MCF 10A (cell line): ENCODE measurements at regions of chr16 and their contacts with region 1.

Region 1: DNA sequence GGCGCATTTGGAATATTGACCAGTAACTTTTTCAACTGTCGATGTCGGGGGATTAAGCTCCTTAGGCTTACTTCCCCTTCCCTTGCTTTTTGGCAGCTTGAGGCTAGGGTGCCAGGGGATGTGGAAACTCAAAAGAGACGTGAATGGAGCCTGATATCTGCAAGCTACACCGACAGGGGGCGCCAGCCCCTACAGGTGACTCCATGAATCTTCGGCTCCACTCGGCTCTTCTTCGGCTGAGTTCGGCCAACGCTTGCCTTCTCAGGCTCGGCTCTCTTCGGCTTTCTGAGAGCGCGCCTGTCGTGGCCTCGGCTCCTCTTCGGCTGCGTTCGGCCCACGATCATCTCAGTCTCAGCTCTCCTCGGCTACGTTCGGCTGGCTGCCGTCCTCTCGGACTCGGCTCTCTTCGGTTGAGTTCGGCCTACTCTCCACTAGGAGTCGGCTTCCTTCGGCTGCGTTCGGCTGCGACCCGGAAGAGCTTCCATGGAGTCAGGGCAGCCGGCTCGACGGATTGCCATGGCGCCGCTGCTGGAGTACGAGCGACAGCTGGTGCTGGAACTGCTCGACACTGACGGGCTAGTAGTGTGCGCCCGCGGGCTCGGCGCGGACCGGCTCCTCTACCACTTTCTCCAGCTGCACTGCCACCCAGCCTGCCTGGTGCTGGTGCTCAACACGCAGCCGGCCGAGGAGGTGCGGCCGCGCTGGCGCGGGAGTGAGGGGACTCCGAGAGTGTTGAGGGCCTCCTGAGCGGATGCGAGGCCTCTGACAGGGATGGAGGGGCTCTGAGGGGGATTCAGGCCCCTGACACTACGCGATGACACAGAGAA is at the start of gene ERCC4:
- DNase-seq: peak; percentile 99
- H3K4me3 Mint-ChIP-seq: peak within 1 kb of the TSS; percentile 91
- H3K27ac Mint-ChIP-seq: peak within 1 kb of the TSS; percentile 95
- H3K4me1 Mint-ChIP-seq: peaks cover 11% of the 10 kb centered on the region
- H3K27me3 Mint-ChIP-seq: peaks cover 10% of the 10 kb centered on the region
- CTCF ChIP-seq: peak; percentile 72
- total RNA-seq, gene ERCC4: 10.3 and 15.9 TPM in 2 replicates

Region 2: DNA sequence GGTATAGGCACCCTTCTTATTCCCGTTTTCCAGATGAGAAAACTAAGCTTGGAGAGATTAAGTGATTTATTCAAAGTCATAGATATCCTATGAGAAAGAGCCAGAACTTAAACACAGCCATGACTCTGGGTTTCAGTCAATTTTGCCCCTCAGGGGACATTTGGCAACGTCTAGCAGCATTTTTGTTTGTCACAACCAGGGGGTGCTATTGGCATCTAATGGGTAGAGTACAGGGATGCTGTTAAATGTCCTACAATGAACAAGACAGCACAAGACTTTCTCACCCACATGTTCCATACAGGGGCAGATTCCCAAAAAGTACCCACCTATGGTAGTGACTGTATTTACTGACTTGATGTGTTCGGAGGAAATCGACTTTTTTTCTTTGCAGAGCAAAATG is 1023.3 kb before region 1 on chr16:
- CTCF ChIA-PET with region 1: interaction called, 4 read pairs
- POLR2A ChIA-PET with region 1: no interaction called
- intact Hi-C with region 1: loop called (anchors 5 kb)
- DNase-seq: peak; percentile 77
- H3K4me3 Mint-ChIP-seq: no peak overlapping the region
- H3K27ac Mint-ChIP-seq: no peak overlapping the region
- H3K4me1 Mint-ChIP-seq: no peaks in the 10 kb centered on the region
- H3K27me3 Mint-ChIP-seq: peaks cover 11% of the 10 kb centered on the region
- CTCF ChIP-seq: peak; percentile 63

Region 3: GRCh38 chr16:13896543-13897183 is 23.2 kb before region 1 on chr16:
- CTCF ChIA-PET with region 1: interaction called, 30 read pairs
- POLR2A ChIA-PET with region 1: interaction called, 3 read pairs
- intact Hi-C with region 1: no loop called
- DNase-seq: peak; percentile 18
- H3K4me3 Mint-ChIP-seq: no peak overlapping the region
- H3K27ac Mint-ChIP-seq: no peak overlapping the region
- H3K4me1 Mint-ChIP-seq: no peaks in the 10 kb centered on the region
- H3K27me3 Mint-ChIP-seq: peaks cover 32% of the 10 kb centered on the region
- CTCF ChIP-seq: peak; percentile 28

Region 4: GRCh38 chr16:13935408-13935807 is 15.5 kb after region 1 on chr16:
- CTCF ChIA-PET with region 1: interaction called, 22 read pairs
- POLR2A ChIA-PET with region 1: interaction called, 5 read pairs
- intact Hi-C with region 1: no loop called
- DNase-seq: no peak
- H3K4me3 Mint-ChIP-seq: no peak overlapping the region
- H3K27ac Mint-ChIP-seq: no peak overlapping the region
- H3K4me1 Mint-ChIP-seq: peaks cover 9% of the 10 kb centered on the region
- H3K27me3 Mint-ChIP-seq: no peaks in the 10 kb centered on the region
- CTCF ChIP-seq: no peak

Region 5: GRCh38 chr16:14013571-14014282 is 93.8 kb after region 1 on chr16:
- CTCF ChIA-PET with region 1: interaction called, 5 read pairs
- POLR2A ChIA-PET with region 1: no interaction called
- intact Hi-C with region 1: loop called (anchors 5 kb)
- DNase-seq: peak; percentile 95
- H3K4me3 Mint-ChIP-seq: peak overlapping the region; percentile 38
- H3K27ac Mint-ChIP-seq: peak overlapping the region; percentile 87
- H3K4me1 Mint-ChIP-seq: peaks cover 20% of the 10 kb centered on the region
- H3K27me3 Mint-ChIP-seq: no peaks in the 10 kb centered on the region
- CTCF ChIP-seq: no peak

Region 6: GRCh38 chr16:14249291-14250032 is 329.6 kb after region 1 on chr16:
- CTCF ChIA-PET with region 1: interaction called, 45 read pairs
- POLR2A ChIA-PET with region 1: no interaction called
- intact Hi-C with region 1: loop called (anchors 1 kb)
- DNase-seq: peak; percentile 54
- H3K4me3 Mint-ChIP-seq: no peak overlapping the region
- H3K27ac Mint-ChIP-seq: no peak overlapping the region
- H3K4me1 Mint-ChIP-seq: no peaks in the 10 kb centered on the region
- H3K27me3 Mint-ChIP-seq: no peaks in the 10 kb centered on the region
- CTCF ChIP-seq: peak; percentile 77